GM10248 (cell line): ENCODE measurements at regions of chr13 and their contacts with region 1.

Region 1: GRCh38 chr13:42816538-42816937 is 35.2 kb downstream of the FAM216B start:
- DNase-seq: no peak
- CTCF ChIP-seq: no peak

Region 2: DNA sequence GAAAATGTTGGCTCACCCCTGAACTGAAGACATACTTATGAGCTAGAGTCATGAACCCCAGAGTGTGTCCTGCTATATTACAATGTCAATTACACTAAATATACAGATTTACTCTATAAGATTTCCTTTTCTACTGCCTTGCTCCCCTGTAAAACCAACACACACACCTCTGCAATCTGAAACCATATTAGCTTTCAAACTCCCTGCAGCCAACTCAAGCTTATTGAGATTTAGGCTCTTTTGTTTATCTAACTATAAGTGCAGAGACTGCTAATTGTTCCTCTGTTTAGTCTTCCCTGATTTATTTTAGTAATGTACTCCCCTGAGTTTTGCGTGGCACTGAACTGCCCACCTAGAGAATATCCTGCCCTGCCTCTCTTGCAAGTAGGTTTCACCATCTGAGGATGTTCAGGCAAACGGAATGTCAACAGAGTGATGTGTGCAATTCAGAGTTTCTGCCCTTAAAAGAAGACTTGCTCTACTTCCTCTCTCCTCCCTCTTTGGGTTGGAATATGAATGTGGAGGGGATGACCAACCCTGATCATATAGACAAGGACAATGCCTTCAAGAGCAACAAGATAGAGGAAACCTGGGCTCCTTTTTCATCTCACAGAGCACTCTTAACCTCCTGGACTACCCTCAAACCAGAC is 12.8 kb before region 1 on chr13:
- CTCF ChIA-PET with region 1: interaction called, 15 read pairs
- POLR2A ChIA-PET with region 1: no interaction called
- DNase-seq: no peak
- CTCF ChIP-seq: no peak